B cell (primary cell): ENCODE measurements at regions of chr11 and their contacts with region 1.

Region 1: GRCh38 chr11:104799251-104799650 is 99.0 kb downstream of the CASP12 start:
- DNase-seq: peak; percentile 48
- ATAC-seq: peak; percentile 57
- H3K4me3 ChIP-seq: peak overlapping the region in 3 of 5 experiments; percentile 16 to 59 (median 28)
- H3K4me3 Mint-ChIP-seq: peak overlapping the region; percentile 92
- H3K27ac ChIP-seq: peak overlapping the region; percentile 68 to 76
- H3K27ac Mint-ChIP-seq: peak overlapping the region; percentile 97
- H3K4me1 ChIP-seq: peaks cover 16 to 18% of the 10 kb centered on the region in 2 donors
- H3K4me1 Mint-ChIP-seq: peaks cover 34% of the 10 kb centered on the region
- H3K27me3 ChIP-seq: no peaks in the 10 kb centered on the region
- H3K27me3 Mint-ChIP-seq: no peaks in the 10 kb centered on the region
- CTCF ChIP-seq: no peak

Region 2: DNA sequence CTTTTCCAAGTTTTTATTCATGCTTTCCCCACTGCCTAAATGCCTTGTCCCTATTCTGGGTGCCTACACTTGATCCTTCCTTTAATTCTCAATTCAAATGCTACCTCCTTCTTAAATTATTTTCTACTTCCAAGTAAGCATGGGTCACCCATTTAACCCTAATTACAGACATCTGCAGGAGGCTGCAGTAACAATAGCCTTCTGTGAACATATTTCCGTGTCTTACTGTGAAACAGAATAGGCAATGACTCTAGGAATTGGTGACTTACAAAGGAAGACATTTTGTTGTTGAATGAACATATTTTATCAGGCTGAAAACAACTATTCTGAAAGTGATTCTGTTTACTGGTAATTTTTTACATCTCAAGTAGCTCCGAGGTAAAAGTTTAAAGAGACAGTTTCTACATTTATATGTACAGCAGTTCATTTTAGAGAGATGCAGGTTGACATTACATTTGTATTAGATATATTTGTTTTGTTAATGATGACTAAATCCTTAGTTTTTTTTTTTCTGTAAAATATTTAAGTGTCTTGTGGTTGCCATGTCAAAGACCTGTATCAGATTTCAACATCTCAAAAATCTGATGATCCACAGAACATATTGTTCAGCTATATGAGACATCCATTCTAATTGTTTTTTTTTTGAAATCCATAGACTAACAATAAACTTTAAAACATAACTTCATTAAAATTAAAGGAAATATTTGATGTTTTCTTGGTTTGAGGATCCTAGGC is 217.8 kb before region 1 on chr11:
- CTCF ChIA-PET with region 1: no interaction called
- POLR2A ChIA-PET with region 1: no interaction called
- intact Hi-C with region 1: no loop called
- DNase-seq: no peak
- ATAC-seq: no peak
- H3K4me3 ChIP-seq: no peak overlapping the region
- H3K4me3 Mint-ChIP-seq: no peak overlapping the region
- H3K27ac ChIP-seq: no peak overlapping the region
- H3K27ac Mint-ChIP-seq: no peak overlapping the region
- H3K4me1 ChIP-seq: no peaks in the 10 kb centered on the region
- H3K4me1 Mint-ChIP-seq: no peaks in the 10 kb centered on the region
- H3K27me3 ChIP-seq: peaks cover 0 to 7% (median 0%) of the 10 kb centered on the region in 4 experiments
- H3K27me3 Mint-ChIP-seq: peaks cover 29% of the 10 kb centered on the region
- CTCF ChIP-seq: no peak

Region 3: GRCh38 chr11:104705490-104706190 is 93.6 kb before region 1 on chr11:
- CTCF ChIA-PET with region 1: interaction called, 4 read pairs
- POLR2A ChIA-PET with region 1: no interaction called
- intact Hi-C with region 1: loop called (anchors 10 kb)
- DNase-seq: peak; percentile 69
- ATAC-seq: peak; percentile 91
- H3K4me3 ChIP-seq: peak overlapping the region; percentile 20 to 57 (median 51)
- H3K4me3 Mint-ChIP-seq: peak overlapping the region; percentile 80
- H3K27ac ChIP-seq: peak overlapping the region; percentile 46 to 87
- H3K27ac Mint-ChIP-seq: peak overlapping the region; percentile 91
- H3K4me1 ChIP-seq: peaks cover 21 to 23% of the 10 kb centered on the region in 2 donors
- H3K4me1 Mint-ChIP-seq: peaks cover 22% of the 10 kb centered on the region
- H3K27me3 ChIP-seq: no peaks in the 10 kb centered on the region
- H3K27me3 Mint-ChIP-seq: no peaks in the 10 kb centered on the region
- CTCF ChIP-seq: no peak

Region 4: GRCh38 chr11:104812103-104812788 is 13.0 kb after region 1 on chr11:
- CTCF ChIA-PET with region 1: no interaction called
- POLR2A ChIA-PET with region 1: no interaction called
- intact Hi-C with region 1: no loop called
- DNase-seq: no peak
- ATAC-seq: no peak
- H3K4me3 ChIP-seq: no peak overlapping the region
- H3K4me3 Mint-ChIP-seq: no peak overlapping the region
- H3K27ac ChIP-seq: no peak overlapping the region
- H3K27ac Mint-ChIP-seq: no peak overlapping the region
- H3K4me1 ChIP-seq: no peaks in the 10 kb centered on the region
- H3K4me1 Mint-ChIP-seq: no peaks in the 10 kb centered on the region
- H3K27me3 ChIP-seq: no peaks in the 10 kb centered on the region
- H3K27me3 Mint-ChIP-seq: no peaks in the 10 kb centered on the region
- CTCF ChIP-seq: no peak

Region 5: DNA sequence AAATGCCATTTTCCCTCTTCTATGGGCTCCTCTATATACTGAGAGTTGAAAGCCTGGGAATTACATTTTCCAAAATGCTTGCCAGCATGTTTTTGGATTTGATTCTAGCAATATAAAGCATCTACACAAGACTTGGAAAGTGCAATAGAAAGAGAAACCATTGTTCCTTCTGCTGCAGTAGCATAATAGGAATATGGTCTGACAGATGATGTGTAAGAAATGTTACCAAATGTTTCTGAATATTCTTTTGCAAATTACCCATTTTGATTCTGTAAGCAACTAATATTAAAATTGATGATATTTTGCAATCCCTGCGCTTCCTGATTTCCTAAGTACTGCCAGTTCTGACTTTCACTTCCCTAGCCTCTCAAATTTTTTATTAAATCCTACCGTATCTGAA is 37.4 kb after region 1 on chr11:
- CTCF ChIA-PET with region 1: no interaction called
- POLR2A ChIA-PET with region 1: no interaction called
- intact Hi-C with region 1: loop called (anchors 5 kb)
- DNase-seq: no peak
- ATAC-seq: no peak
- H3K4me3 ChIP-seq: no peak overlapping the region
- H3K4me3 Mint-ChIP-seq: no peak overlapping the region
- H3K27ac ChIP-seq: no peak overlapping the region
- H3K27ac Mint-ChIP-seq: no peak overlapping the region
- H3K4me1 ChIP-seq: peaks cover 11 to 18% of the 10 kb centered on the region in 2 donors
- H3K4me1 Mint-ChIP-seq: peaks cover 25% of the 10 kb centered on the region
- H3K27me3 ChIP-seq: no peaks in the 10 kb centered on the region
- H3K27me3 Mint-ChIP-seq: no peaks in the 10 kb centered on the region
- CTCF ChIP-seq: no peak

Region 6: DNA sequence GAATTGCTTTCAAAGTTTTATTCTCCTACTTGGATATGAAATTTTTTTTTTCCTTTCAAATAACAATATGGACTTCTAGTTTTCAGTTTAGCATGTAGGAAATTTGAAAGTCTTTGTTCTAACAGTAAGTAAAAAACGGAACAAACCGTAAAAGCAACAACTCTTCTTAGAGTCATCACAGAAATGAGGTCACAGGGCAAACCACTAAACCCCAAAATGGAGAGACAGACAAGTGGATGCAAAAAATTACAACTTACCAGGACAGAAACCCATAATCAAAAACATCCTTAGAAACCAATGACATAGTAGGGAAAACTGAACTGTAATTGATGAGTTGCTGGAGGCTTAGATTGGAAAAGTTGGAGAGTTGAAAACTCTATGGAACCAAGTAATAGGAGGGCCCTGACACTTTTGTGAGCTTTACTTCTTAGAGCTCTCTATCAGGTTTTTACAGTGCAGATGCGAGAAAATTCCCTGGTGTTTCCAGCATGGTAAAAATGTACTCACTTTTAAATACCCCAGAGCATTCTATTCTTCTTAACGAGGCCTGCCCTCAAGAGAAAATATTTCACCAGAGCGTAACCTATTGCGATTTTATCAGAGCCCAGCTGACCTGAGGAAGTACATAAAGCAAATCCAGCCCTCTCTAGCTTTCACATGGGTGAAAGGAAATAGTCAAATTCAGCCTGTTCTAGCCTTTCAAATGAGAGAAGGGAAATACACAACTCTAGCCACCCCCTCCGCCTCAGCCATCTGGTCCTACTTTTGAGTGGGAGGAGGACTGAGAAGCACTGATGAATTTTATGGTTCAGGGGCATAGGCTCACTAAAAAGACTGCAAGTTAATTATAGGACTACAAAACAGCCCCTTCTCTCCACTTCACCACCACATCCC is 59.9 kb after region 1 on chr11:
- CTCF ChIA-PET with region 1: no interaction called
- POLR2A ChIA-PET with region 1: no interaction called
- intact Hi-C with region 1: loop called (anchors 2 kb)
- DNase-seq: peak; percentile 66
- ATAC-seq: peak; percentile 88
- H3K4me3 ChIP-seq: peak overlapping the region in 3 of 5 experiments; percentile 15 to 46 (median 38)
- H3K4me3 Mint-ChIP-seq: peak overlapping the region; percentile 79
- H3K27ac ChIP-seq: peak overlapping the region; percentile 72 to 89
- H3K27ac Mint-ChIP-seq: peak overlapping the region; percentile 91
- H3K4me1 ChIP-seq: peaks cover 18 to 27% of the 10 kb centered on the region in 2 donors
- H3K4me1 Mint-ChIP-seq: peaks cover 34% of the 10 kb centered on the region
- H3K27me3 ChIP-seq: no peaks in the 10 kb centered on the region
- H3K27me3 Mint-ChIP-seq: no peaks in the 10 kb centered on the region
- CTCF ChIP-seq: no peak

Region 7: GRCh38 chr11:105044921-105045524 is 245.8 kb after region 1 on chr11 and contains the start of gene CARD16:
- CTCF ChIA-PET with region 1: interaction called, 3 read pairs
- POLR2A ChIA-PET with region 1: no interaction called
- intact Hi-C with region 1: loop called (anchors 10 kb)
- DNase-seq: peak; percentile 64
- ATAC-seq: peak; percentile 93
- H3K4me3 ChIP-seq: peak within 1 kb of the TSS; percentile 59 to 95 (median 68)
- H3K4me3 Mint-ChIP-seq: peak within 1 kb of the TSS; percentile 90
- H3K27ac ChIP-seq: peak within 1 kb of the TSS; percentile 68 to 75
- H3K27ac Mint-ChIP-seq: peak within 1 kb of the TSS; percentile 92
- H3K4me1 ChIP-seq: peaks cover 29 to 37% of the 10 kb centered on the region in 2 donors
- H3K4me1 Mint-ChIP-seq: peaks cover 41% of the 10 kb centered on the region
- H3K27me3 ChIP-seq: no peaks in the 10 kb centered on the region
- H3K27me3 Mint-ChIP-seq: no peaks in the 10 kb centered on the region
- CTCF ChIP-seq: no peak
- total RNA-seq, gene CARD16: 25.0 and 33.6 TPM in 2 replicates